Mammary epithelial cell (primary cell): ENCODE measurements at regions of chr17 and their contacts with region 1.

Region 1: DNA sequence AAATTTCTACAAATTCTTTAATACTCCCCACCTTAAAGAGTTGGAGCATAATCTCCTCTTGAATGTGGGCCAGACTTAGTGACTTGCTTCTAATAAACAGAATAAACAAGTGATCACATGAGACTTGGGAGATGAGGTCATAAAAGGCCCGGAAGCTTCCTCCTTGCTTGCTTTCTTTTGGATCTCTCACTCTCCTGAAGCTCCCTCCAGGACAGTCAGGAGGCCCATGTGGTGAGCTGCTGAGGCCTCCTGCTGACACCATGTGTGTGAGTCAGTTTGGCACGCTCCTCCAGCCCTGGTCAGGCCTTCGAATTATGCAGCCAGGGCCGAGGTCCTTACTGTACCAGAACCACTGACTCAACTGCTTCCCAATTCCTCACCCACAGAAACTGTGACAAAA is 53.2 kb downstream of the NDEL1 start:
- DNase-seq: peak; percentile 75
- H3K4me3 ChIP-seq: no peak overlapping the region
- H3K27ac ChIP-seq: no peak overlapping the region
- H3K4me1 ChIP-seq: peaks cover 6% of the 10 kb centered on the region
- H3K27me3 ChIP-seq: no peaks in the 10 kb centered on the region
- CTCF ChIP-seq: peak in 1 of 2 donors; percentile 25

Region 2: GRCh38 chr17:8275421-8276290 is 213.2 kb before region 1 on chr17:
- CTCF ChIA-PET with region 1: no interaction called
- dilution Hi-C with region 1: no loop called
- in situ Hi-C with region 1: no loop called
- intact Hi-C with region 1: no loop called
- DNase-seq: no peak
- H3K4me3 ChIP-seq: no peak overlapping the region
- H3K27ac ChIP-seq: no peak overlapping the region
- H3K4me1 ChIP-seq: no peaks in the 10 kb centered on the region
- H3K27me3 ChIP-seq: no peaks in the 10 kb centered on the region
- CTCF ChIP-seq: no peak

Region 3: GRCh38 chr17:8447799-8448198 is 41.1 kb before region 1 on chr17:
- CTCF ChIA-PET with region 1: no interaction called
- dilution Hi-C with region 1: loop called (anchors 10 kb)
- in situ Hi-C with region 1: no loop called
- intact Hi-C with region 1: no loop called
- DNase-seq: no peak
- H3K4me3 ChIP-seq: no peak overlapping the region
- H3K27ac ChIP-seq: no peak overlapping the region
- H3K4me1 ChIP-seq: no peaks in the 10 kb centered on the region
- H3K27me3 ChIP-seq: no peaks in the 10 kb centered on the region
- CTCF ChIP-seq: no peak

Region 4: GRCh38 chr17:8506145-8506544 is 17.2 kb after region 1 on chr17:
- CTCF ChIA-PET with region 1: no interaction called
- dilution Hi-C with region 1: no loop called
- in situ Hi-C with region 1: no loop called
- intact Hi-C with region 1: no loop called
- DNase-seq: no peak
- H3K4me3 ChIP-seq: no peak overlapping the region
- H3K27ac ChIP-seq: no peak overlapping the region
- H3K4me1 ChIP-seq: no peaks in the 10 kb centered on the region
- H3K27me3 ChIP-seq: no peaks in the 10 kb centered on the region
- CTCF ChIP-seq: no peak

Region 5: DNA sequence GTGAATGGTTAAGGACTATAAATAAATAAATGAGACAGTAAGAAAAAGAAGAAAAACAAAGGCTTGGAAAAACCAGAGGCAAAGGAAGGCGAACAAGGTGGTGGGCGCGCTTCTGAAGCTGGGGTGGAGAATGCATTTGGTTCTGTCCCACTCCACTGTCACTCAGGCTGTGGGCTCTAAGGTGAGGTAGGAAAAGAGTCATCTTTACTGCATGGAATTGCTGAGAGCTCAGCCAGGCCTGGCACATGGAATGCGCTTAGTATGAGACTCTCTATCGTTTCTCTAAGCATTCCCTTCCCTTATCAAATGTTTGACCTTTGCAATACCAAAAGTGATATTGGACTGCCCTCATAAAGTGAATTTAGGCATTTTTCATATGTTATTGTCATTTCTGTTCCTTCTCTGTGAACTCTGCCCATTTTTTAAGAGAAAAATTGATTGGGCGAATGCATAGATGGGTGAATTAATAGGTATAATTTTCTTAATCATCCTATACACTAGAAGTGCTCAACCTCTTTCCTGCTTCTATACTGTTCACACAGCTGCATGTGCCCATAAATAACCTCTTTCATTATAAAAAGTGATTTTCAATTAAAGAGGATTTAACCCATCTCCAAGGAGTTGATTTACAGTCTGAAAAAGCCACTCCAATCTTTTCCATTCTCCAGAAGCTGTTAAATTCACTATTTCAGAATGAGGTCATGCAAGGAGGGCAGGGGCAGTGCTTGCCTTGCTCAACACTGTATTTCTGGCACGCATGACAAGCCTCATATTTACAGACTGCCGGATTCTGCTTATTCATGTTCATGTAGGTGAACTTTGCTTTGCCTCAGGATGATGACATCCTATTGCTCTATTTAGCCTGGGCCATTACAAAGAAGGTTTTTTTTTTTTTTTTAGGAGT is 54.0 kb after region 1 on chr17:
- CTCF ChIA-PET with region 1: no interaction called
- dilution Hi-C with region 1: loop called (anchors 5 kb)
- in situ Hi-C with region 1: no loop called
- intact Hi-C with region 1: no loop called
- DNase-seq: peak; percentile 39
- H3K4me3 ChIP-seq: no peak overlapping the region
- H3K27ac ChIP-seq: no peak overlapping the region
- H3K4me1 ChIP-seq: no peaks in the 10 kb centered on the region
- H3K27me3 ChIP-seq: no peaks in the 10 kb centered on the region
- CTCF ChIP-seq: no peak

Region 6: DNA sequence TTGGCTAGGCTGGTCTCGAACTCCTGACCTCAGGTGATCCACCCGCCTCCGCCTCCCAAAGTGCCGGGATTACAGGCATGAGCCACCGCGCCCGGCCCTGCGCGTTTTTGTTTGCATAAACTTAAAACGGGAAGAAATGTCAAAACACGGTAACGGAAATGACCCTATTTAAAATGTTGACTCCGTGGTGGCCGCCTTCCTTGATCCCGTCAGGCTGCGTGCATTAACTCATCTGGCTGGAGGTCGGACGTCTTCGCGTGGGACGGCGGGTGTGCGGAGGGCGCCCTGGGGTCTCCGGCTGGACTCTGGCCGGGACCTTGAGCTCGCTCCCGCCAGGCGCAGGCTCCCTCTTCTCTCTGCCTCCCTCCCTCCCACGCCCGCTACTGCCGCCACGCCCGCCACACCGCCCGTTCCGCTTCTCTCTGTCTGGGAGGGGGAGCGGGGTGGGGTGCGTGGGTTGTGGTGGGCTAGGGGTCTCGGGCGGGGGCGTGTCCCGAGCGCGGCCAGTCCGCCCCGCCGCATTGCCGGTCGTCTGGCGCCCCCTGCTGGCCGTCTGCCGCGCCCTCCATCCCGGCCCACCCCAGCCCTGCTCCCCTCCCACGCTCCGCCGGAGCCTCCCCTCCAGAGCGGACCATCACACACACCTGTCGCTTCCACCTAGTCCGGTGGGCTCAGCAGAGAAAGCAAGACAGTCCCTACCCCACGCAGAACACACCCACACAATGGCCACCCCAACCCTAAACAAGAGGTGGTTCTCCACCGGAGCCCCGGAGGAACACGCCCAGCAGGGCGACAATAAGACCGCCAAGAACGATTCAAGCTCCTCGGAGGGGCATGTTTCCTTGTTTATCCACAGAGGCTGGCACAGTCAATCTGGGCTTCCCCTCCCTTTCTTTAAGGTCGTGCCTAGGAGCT is 256.9 kb after region 1 on chr17:
- CTCF ChIA-PET with region 1: no interaction called
- dilution Hi-C with region 1: no loop called
- in situ Hi-C with region 1: no loop called
- intact Hi-C with region 1: loop called (anchors 1 kb)
- DNase-seq: peak; percentile 22
- H3K4me3 ChIP-seq: peak overlapping the region; percentile 47 to 65 (median 56)
- H3K27ac ChIP-seq: no peak overlapping the region
- H3K4me1 ChIP-seq: peaks cover 5% of the 10 kb centered on the region
- H3K27me3 ChIP-seq: no peaks in the 10 kb centered on the region
- CTCF ChIP-seq: peak; percentile 25 to 82